ENCODE measurements at regions of chr10 and their contacts with region 1.

Region 1: GRCh38 chr10:63819753-63820329 is 298.6 kb downstream of the REEP3 start:
- DNase-seq: peak; percentile 63 to 75
- ATAC-seq: no peak
- H3K4me3 ChIP-seq: no peak overlapping the region
- H3K27ac ChIP-seq: no peak overlapping the region
- H3K4me1 ChIP-seq: no peaks in the 10 kb centered on the region
- H3K27me3 ChIP-seq: peaks cover 0 to 1% (median 0%) of the 10 kb centered on the region in 3 donors
- CTCF ChIP-seq: peak; percentile 68

Region 2: GRCh38 chr10:63166742-63167258 is 653.0 kb before region 1 on chr10:
- intact Hi-C with region 1: loop called in 1 of 2 experiments (anchors 10 kb)
- DNase-seq: no peak
- ATAC-seq: peak; percentile 65 to 84 (median 76)
- H3K4me3 ChIP-seq: no peak overlapping the region
- H3K27ac ChIP-seq: no peak overlapping the region
- H3K4me1 ChIP-seq: peaks cover 12% of the 10 kb centered on the region
- H3K27me3 ChIP-seq: no peaks in the 10 kb centered on the region
- CTCF ChIP-seq: peak; percentile 79

Region 3: GRCh38 chr10:63217120-63217605 is 602.7 kb before region 1 on chr10:
- intact Hi-C with region 1: loop called in 1 of 2 experiments (anchors 5 kb)
- DNase-seq: no peak
- ATAC-seq: peak; percentile 62 to 88 (median 78)
- H3K4me3 ChIP-seq: no peak overlapping the region
- H3K27ac ChIP-seq: no peak overlapping the region
- H3K4me1 ChIP-seq: peaks cover 3% of the 10 kb centered on the region
- H3K27me3 ChIP-seq: no peaks in the 10 kb centered on the region
- CTCF ChIP-seq: peak; percentile 72

Region 4: GRCh38 chr10:63769367-63769766 is 50.5 kb before region 1 on chr10:
- intact Hi-C with region 1: no loop called
- DNase-seq: no peak
- ATAC-seq: no peak
- H3K4me3 ChIP-seq: no peak overlapping the region
- H3K27ac ChIP-seq: no peak overlapping the region
- H3K4me1 ChIP-seq: no peaks in the 10 kb centered on the region
- H3K27me3 ChIP-seq: no peaks in the 10 kb centered on the region
- CTCF ChIP-seq: no peak

Region 5: DNA sequence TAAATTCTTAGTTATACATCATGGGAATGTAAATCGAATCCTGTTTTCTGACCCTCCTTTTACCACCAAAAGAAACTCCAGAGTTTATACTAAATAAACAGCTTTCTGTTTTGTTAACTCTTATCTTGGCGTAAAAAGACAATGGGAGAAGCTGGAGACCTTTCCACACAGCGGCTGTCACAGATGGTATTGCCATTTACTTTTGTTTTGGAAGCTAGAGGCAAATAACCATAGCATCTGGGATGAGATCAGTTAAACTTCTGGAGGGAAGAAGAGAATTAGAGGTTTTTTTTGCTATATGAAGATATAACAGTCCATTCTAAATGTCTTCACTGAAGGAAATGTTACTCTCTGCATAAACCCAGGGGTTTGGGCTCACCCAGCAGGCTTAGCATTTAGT is 39.7 kb before region 1 on chr10:
- intact Hi-C with region 1: no loop called
- DNase-seq: no peak
- ATAC-seq: no peak
- H3K4me3 ChIP-seq: no peak overlapping the region
- H3K27ac ChIP-seq: no peak overlapping the region
- H3K4me1 ChIP-seq: peaks cover 7% of the 10 kb centered on the region
- H3K27me3 ChIP-seq: no peaks in the 10 kb centered on the region
- CTCF ChIP-seq: no peak

Measured in psoas muscle (tissue), 8 donors.